Mammary epithelial cell (primary cell): ENCODE measurements at regions of chr22 and their contacts with region 1.

Region 1: DNA sequence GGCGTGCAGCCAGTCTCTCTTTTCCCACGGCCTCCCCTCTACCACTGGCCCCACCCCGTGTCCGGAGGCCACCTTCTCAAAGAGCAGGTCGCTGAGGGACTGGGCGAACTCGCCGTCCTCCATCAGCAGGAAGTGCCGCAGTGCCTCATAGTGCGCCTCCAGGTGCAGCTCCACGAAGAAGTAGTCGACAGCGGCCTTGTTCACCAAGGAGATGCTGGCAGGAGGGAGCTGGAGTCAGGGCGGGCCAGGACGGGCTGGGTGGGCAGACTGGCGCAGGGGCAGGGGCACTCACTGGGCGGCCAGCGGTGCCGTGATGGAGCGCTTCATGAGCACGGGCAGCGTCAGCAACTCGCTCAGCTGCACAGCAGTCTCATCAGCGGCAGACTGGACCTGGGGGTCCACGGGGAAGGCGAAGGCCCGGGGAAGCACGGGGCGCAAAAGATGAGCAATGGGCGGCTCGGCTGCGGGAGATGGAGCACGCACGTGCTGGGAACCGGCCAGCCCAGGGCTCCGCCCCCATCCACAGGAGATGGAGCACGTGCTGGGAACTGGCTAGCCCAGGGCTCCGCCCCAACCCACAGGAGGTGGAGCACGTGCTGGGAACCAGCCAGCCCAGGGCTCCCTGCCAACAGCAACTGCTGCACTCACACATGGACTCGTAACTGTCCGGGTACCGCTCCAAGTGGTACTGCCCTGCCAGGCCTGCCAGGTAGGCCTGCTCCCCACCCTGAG is 18.4 kb downstream of the SELENOO start:
- DNase-seq: peak; percentile 42
- H3K4me3 ChIP-seq: no peak overlapping the region
- H3K27ac ChIP-seq: no peak overlapping the region
- H3K4me1 ChIP-seq: no peaks in the 10 kb centered on the region
- H3K27me3 ChIP-seq: no peaks in the 10 kb centered on the region
- CTCF ChIP-seq: no peak

Region 2: GRCh38 chr22:49548356-49549211 is 670.6 kb before region 1 on chr22:
- CTCF ChIA-PET with region 1: no interaction called
- dilution Hi-C with region 1: no loop called
- in situ Hi-C with region 1: no loop called
- intact Hi-C with region 1: no loop called
- DNase-seq: no peak
- H3K4me3 ChIP-seq: no peak overlapping the region
- H3K27ac ChIP-seq: no peak overlapping the region
- H3K4me1 ChIP-seq: no peaks in the 10 kb centered on the region
- H3K27me3 ChIP-seq: no peaks in the 10 kb centered on the region
- CTCF ChIP-seq: no peak

Region 3: DNA sequence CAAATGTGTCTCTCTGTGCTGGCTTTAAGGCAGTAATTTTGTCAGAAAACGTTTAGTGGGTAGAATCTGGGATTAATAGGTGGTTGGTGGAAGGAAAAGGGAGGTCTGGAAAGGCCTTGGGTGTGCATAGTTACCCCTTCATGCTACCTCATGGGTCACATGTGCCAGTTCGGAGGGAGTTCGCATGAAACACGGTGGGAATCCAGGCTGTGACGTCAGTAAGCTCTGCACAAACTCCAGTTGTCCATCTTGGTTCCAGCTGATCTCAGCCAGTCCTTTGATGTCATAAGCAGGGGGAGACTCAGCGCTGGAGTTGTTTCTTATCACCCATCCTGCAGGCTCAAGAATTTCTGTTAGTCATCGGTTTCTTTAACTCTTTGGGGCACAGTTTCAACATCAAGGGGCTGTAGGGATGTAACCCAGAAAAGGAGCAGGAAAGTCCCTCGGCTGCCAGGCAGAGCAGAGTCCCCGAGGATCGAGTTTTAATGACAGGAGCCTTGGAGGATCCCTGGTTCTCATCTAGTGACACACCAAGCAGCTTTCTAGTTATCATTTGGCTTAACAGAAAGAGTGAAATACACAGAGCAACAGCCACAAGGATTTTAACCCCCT is 100.5 kb before region 1 on chr22:
- CTCF ChIA-PET with region 1: no interaction called
- dilution Hi-C with region 1: loop called (anchors 5 kb)
- in situ Hi-C with region 1: no loop called
- intact Hi-C with region 1: no loop called
- DNase-seq: no peak
- H3K4me3 ChIP-seq: no peak overlapping the region
- H3K27ac ChIP-seq: no peak overlapping the region
- H3K4me1 ChIP-seq: peaks cover 10% of the 10 kb centered on the region
- H3K27me3 ChIP-seq: no peaks in the 10 kb centered on the region
- CTCF ChIP-seq: no peak